ENCODE measurements at regions of chr18 and their contacts with region 1.

Region 1: DNA sequence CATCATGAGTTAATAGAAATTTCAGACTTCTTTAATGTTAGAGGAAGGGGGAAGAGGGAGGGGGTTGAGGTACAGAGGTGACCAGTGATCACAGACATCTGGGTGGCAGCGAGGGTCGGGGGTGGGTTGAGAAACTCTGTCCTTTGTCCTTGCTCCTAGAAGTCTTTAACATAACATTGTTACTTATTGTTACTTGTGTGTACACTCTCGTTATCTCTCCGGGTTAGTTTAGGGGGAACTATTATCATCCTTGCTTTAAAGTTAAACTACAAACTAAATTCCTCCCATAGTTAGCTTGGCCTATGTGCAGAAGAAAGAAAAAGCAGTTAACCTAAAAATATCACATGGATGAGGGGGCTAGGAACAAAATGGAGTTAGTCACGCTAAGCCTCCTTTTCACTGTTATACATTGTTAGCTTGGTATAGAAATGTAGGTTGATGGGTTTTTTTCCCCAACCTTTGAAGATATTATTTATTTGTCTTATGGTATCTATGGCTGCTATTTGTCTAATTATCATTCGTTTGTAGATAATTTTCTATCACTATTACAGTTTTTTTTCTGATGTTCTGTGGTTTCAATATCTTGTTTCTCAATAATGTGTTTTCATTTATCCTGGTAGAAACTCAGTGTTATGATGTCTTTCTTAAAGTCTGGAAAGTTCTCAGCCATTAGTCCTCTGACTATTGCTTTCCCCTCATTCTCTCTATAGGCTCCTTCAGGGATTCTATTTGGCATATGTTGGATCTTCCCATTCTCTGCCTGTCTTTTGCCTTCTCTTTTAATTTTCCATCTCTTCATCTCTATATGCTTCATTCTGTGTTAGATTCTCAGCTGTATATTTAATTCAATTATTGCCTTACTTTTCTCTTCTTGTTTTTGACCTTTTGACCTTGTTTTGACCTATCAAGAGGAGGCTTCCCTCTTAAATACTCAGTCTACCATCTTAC is 13.2 kb upstream of the B4GALT6 start:
- DNase-seq: no peak
- H3K4me3 ChIP-seq: no peak overlapping the region
- H3K4me3 Mint-ChIP-seq: no peak overlapping the region
- H3K27ac Mint-ChIP-seq: peak overlapping the region; percentile 53
- H3K4me1 ChIP-seq: no peaks in the 10 kb centered on the region; the same call in 1 of the 2 replicates
- H3K4me1 Mint-ChIP-seq: peaks cover 8% of the 10 kb centered on the region
- H3K27me3 ChIP-seq: no peaks in the 10 kb centered on the region
- H3K27me3 Mint-ChIP-seq: no peaks in the 10 kb centered on the region
- CTCF ChIP-seq: no peak

Region 2: GRCh38 chr18:31661965-31662364 is 35.7 kb before region 1 on chr18:
- CTCF ChIA-PET with region 1: no interaction called
- POLR2A ChIA-PET with region 1: no interaction called
- intact Hi-C with region 1: loop called (anchors 1 kb)
- DNase-seq: no peak
- H3K4me3 ChIP-seq: no peak overlapping the region
- H3K4me3 Mint-ChIP-seq: no peak overlapping the region
- H3K27ac Mint-ChIP-seq: no peak overlapping the region
- H3K4me1 ChIP-seq: peaks cover 20% of the 10 kb centered on the region; the same call in 1 of the 2 replicates
- H3K4me1 Mint-ChIP-seq: peaks cover 6% of the 10 kb centered on the region
- H3K27me3 ChIP-seq: no peaks in the 10 kb centered on the region
- H3K27me3 Mint-ChIP-seq: no peaks in the 10 kb centered on the region
- CTCF ChIP-seq: no peak

Measured in Caco-2 (cell line).